ENCODE measurements at regions of chr12 and their contacts with region 1.

Region 1: GRCh38 chr12:56117778-56118687 is at the start of gene ZC3H10:
- DNase-seq: peak; percentile 89
- ATAC-seq: peak; percentile 76
- H3K4me3 Mint-ChIP-seq: peak within 1 kb of the TSS; percentile 100
- H3K27ac Mint-ChIP-seq: peak within 1 kb of the TSS; percentile 99
- H3K4me1 Mint-ChIP-seq: peaks cover 37% of the 10 kb centered on the region
- H3K27me3 Mint-ChIP-seq: no peaks in the 10 kb centered on the region
- CTCF ChIP-seq: no peak
- total RNA-seq, gene ZC3H10: 15.4 and 17.1 TPM in 2 replicates

Region 2: DNA sequence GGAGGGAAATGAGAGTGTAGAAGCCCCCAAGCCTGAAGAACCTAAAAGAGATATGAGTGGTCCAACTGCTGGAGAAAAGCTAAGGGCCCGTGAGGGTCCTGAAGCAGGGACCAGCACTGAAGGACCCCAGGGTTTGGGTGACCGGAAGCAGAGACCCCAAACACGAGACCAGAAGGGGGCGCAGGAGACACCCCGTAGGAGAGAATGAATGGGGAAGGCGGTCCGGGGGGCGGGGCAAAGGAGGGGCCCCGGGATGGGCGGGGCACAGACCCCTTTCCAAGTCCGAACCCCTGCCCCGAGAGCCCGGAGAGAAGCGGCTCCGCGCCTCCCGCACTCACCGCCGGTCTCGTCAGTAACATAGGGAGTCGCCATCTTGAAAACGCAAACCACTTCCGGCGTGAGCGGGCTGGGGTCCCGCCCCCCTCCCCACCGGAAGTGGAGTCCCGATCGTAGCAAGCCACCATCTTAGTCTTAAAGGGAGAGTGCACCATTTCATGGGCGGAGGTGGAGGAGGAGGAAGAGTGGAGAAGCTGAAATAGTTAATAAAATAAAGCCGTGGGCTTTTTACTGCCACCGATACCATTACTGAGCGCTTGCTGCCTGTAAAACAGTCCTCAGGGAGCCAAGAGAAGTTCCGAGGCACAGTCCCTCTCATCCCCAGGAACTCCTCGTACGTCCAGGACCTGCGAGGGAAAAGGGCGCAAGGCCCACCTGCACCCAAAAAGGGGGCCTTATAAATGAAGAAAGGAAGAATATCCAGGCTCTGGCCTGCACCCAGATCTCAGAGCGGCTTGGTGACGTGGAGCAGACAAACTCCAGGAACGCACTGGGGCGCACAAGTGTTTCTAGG is 191.1 kb before region 1 on chr12:
- CTCF ChIA-PET with region 1: no interaction called
- POLR2A ChIA-PET with region 1: interaction called, 5 read pairs
- intact Hi-C with region 1: loop called (anchors 2 kb)
- DNase-seq: peak; percentile 84
- ATAC-seq: peak; percentile 48
- H3K4me3 Mint-ChIP-seq: peak overlapping the region; percentile 98
- H3K27ac Mint-ChIP-seq: peak overlapping the region; percentile 98
- H3K4me1 Mint-ChIP-seq: peaks cover 67% of the 10 kb centered on the region
- H3K27me3 Mint-ChIP-seq: no peaks in the 10 kb centered on the region
- CTCF ChIP-seq: peak; percentile 50

Region 3: GRCh38 chr12:56104109-56104814 is 13.8 kb before region 1 on chr12 and contains the start of gene PA2G4:
- CTCF ChIA-PET with region 1: interaction called, 10 read pairs
- POLR2A ChIA-PET with region 1: interaction called, 112 read pairs
- intact Hi-C with region 1: loop called (anchors 1 kb)
- DNase-seq: peak; percentile 92
- ATAC-seq: peak; percentile 91
- H3K4me3 Mint-ChIP-seq: peak within 1 kb of the TSS; percentile 98
- H3K27ac Mint-ChIP-seq: peak within 1 kb of the TSS; percentile 93
- H3K4me1 Mint-ChIP-seq: peaks cover 33% of the 10 kb centered on the region
- H3K27me3 Mint-ChIP-seq: no peaks in the 10 kb centered on the region
- CTCF ChIP-seq: no peak
- total RNA-seq, gene PA2G4: 137 and 155 TPM in 2 replicates

Region 4: GRCh38 chr12:56206457-56207166 is 88.6 kb after region 1 on chr12:
- CTCF ChIA-PET with region 1: interaction called, 3 read pairs
- POLR2A ChIA-PET with region 1: interaction called, 11 read pairs
- intact Hi-C with region 1: no loop called
- DNase-seq: no peak
- ATAC-seq: peak; percentile 47
- H3K4me3 Mint-ChIP-seq: no peak overlapping the region
- H3K27ac Mint-ChIP-seq: peak overlapping the region; percentile 80
- H3K4me1 Mint-ChIP-seq: peaks cover 39% of the 10 kb centered on the region
- H3K27me3 Mint-ChIP-seq: no peaks in the 10 kb centered on the region
- CTCF ChIP-seq: no peak

Region 5: DNA sequence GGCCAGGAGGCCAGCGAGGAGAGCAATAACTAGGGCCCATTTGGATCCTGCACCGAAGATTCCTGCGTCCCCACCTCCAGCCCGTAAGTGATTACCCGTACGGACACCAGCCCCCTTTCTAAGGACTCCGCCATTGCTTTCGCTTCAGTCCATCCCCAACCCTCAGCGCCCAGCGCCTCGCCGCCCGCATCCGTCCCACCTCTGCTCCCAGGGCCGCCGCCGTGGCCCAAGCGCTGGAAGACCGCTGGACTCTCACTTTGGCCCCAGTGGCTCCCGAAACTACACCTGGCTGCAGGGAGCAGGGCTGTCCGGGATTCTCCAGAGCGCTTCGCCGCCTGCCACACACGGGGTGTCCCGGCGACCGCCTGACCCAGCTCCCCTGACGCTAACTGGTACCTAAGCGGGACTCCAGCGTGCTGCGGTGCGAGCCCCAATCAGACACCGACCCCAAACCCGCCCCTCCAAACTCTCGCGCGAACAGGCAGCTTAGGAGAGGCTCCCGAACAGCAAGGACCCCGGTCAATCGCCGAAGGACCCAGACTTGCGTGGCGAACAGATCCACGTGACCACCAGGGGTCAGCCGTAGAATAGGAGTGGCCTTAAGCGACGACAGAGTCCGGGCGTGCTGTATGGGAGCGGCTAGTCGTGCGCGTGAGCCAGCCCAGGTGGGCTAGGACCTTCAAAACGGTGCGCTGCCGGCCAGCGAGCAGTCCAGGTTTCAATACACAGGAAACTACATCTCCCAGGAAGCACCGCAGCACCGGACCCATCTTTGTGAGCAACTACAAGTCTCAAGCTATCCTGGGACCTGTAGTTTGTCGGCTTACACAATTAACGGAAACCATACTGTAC is 197.8 kb after region 1 on chr12 and contains the start of gene CNPY2:
- CTCF ChIA-PET with region 1: no interaction called
- POLR2A ChIA-PET with region 1: interaction called, 28 read pairs
- intact Hi-C with region 1: loop called (anchors 1 kb)
- DNase-seq: peak; percentile 85
- ATAC-seq: peak; percentile 89
- H3K4me3 Mint-ChIP-seq: peak within 1 kb of the TSS; percentile 98
- H3K27ac Mint-ChIP-seq: peak within 1 kb of the TSS; percentile 98
- H3K4me1 Mint-ChIP-seq: peaks cover 21% of the 10 kb centered on the region
- H3K27me3 Mint-ChIP-seq: no peaks in the 10 kb centered on the region
- CTCF ChIP-seq: no peak
- total RNA-seq, gene CNPY2: 72.1 and 98.8 TPM in 2 replicates

Region 6: GRCh38 chr12:56636675-56637540 is 518.9 kb after region 1 on chr12:
- CTCF ChIA-PET with region 1: no interaction called
- POLR2A ChIA-PET with region 1: interaction called, 10 read pairs
- intact Hi-C with region 1: loop called (anchors 2 kb)
- DNase-seq: peak; percentile 95
- ATAC-seq: peak; percentile 64
- H3K4me3 Mint-ChIP-seq: peak overlapping the region; percentile 96
- H3K27ac Mint-ChIP-seq: peak overlapping the region; percentile 97
- H3K4me1 Mint-ChIP-seq: peaks cover 64% of the 10 kb centered on the region
- H3K27me3 Mint-ChIP-seq: no peaks in the 10 kb centered on the region
- CTCF ChIP-seq: no peak

Measured in activated B cell treated with CpG ODN at 0.5 μM for 24 hours (primary cell).